Caco-2 (cell line): ENCODE measurements at regions of chr10 and their contacts with region 1.

Region 1: DNA sequence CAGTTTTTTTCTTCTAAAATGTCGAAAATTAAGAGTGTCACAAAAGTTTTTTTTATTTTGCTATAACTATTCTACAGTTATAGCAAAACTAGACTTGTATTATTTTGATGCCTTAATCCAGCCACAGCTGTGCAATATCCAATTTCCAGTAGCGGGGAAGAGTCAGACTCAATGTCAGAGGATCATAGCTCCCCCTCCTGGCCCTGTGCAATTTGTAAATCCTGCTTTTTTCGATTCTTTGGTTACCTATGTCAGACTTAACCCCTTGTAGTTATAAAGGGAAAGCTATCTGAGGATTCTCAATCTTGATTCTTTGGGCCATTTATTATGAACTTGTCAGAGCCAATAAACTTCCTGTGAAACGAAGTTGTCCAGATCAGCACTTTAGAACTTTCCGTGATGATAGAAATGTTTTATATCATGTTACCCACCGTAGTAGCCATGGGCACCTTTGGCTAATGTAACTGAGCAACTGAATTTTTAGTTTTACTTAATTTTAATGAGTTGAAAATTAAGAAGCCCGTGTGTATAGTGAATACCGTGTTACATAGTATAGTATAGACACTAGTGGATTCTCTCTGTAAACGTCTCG is 87.7 kb upstream of the PRKCQ start:
- DNase-seq: peak; percentile 53 to 58
- H3K4me3 ChIP-seq: no peak overlapping the region
- H3K4me3 Mint-ChIP-seq: no peak overlapping the region
- H3K27ac Mint-ChIP-seq: no peak overlapping the region
- H3K4me1 ChIP-seq: no peaks in the 10 kb centered on the region
- H3K4me1 Mint-ChIP-seq: no peaks in the 10 kb centered on the region
- H3K27me3 ChIP-seq: no peaks in the 10 kb centered on the region
- H3K27me3 Mint-ChIP-seq: peaks cover 17% of the 10 kb centered on the region
- CTCF ChIP-seq: peak; percentile 74 to 77

Region 2: DNA sequence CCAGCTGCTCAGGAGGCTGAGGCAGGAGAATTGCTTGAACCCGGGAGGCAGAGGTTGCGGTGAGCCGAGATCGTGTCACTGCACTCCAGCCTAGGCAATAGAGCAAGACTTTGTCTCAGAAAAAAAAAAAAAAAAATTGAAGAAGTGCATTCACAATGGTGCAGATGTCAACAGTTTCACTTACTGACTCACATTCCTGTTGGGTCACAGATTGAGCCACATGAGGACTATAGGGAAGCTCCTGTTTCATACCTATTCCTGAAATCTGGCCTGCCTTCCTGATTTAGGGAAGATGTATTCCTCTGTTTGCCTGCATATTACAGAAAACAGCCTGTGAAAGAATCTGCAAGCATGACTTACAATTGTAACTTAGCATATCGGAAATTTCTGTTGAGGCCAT is 1393.0 kb before region 1 on chr10:
- CTCF ChIA-PET with region 1: no interaction called
- POLR2A ChIA-PET with region 1: no interaction called
- intact Hi-C with region 1: no loop called
- DNase-seq: no peak
- H3K4me3 ChIP-seq: no peak overlapping the region
- H3K4me3 Mint-ChIP-seq: no peak overlapping the region
- H3K27ac Mint-ChIP-seq: no peak overlapping the region
- H3K4me1 ChIP-seq: no peaks in the 10 kb centered on the region
- H3K4me1 Mint-ChIP-seq: no peaks in the 10 kb centered on the region
- H3K27me3 ChIP-seq: no peaks in the 10 kb centered on the region
- H3K27me3 Mint-ChIP-seq: peaks cover 3% of the 10 kb centered on the region
- CTCF ChIP-seq: no peak

Region 3: GRCh38 chr10:6351495-6351894 is 316.3 kb before region 1 on chr10:
- CTCF ChIA-PET with region 1: no interaction called
- POLR2A ChIA-PET with region 1: no interaction called
- intact Hi-C with region 1: no loop called
- DNase-seq: no peak
- H3K4me3 ChIP-seq: no peak overlapping the region
- H3K4me3 Mint-ChIP-seq: no peak overlapping the region
- H3K27ac Mint-ChIP-seq: no peak overlapping the region
- H3K4me1 ChIP-seq: peaks cover 12% of the 10 kb centered on the region
- H3K4me1 Mint-ChIP-seq: no peaks in the 10 kb centered on the region
- H3K27me3 ChIP-seq: no peaks in the 10 kb centered on the region
- H3K27me3 Mint-ChIP-seq: no peaks in the 10 kb centered on the region
- CTCF ChIP-seq: no peak

Region 4: GRCh38 chr10:6416892-6417512 is 250.8 kb before region 1 on chr10:
- CTCF ChIA-PET with region 1: interaction called, 6 read pairs
- POLR2A ChIA-PET with region 1: no interaction called
- intact Hi-C with region 1: loop called (anchors 1 kb)
- DNase-seq: peak in 1 of 2 experiments; percentile 68
- H3K4me3 ChIP-seq: no peak overlapping the region
- H3K4me3 Mint-ChIP-seq: no peak overlapping the region
- H3K27ac Mint-ChIP-seq: no peak overlapping the region
- H3K4me1 ChIP-seq: no peaks in the 10 kb centered on the region
- H3K4me1 Mint-ChIP-seq: no peaks in the 10 kb centered on the region
- H3K27me3 ChIP-seq: peaks cover 5% of the 10 kb centered on the region
- H3K27me3 Mint-ChIP-seq: peaks cover 14% of the 10 kb centered on the region
- CTCF ChIP-seq: peak in 1 of 2 experiments; percentile 81

Region 5: GRCh38 chr10:6445501-6446316 is 222.1 kb before region 1 on chr10:
- CTCF ChIA-PET with region 1: no interaction called
- POLR2A ChIA-PET with region 1: no interaction called
- intact Hi-C with region 1: loop called (anchors 5 kb)
- DNase-seq: peak in 1 of 2 experiments; percentile 40
- H3K4me3 ChIP-seq: no peak overlapping the region
- H3K4me3 Mint-ChIP-seq: no peak overlapping the region
- H3K27ac Mint-ChIP-seq: no peak overlapping the region
- H3K4me1 ChIP-seq: no peaks in the 10 kb centered on the region
- H3K4me1 Mint-ChIP-seq: no peaks in the 10 kb centered on the region
- H3K27me3 ChIP-seq: no peaks in the 10 kb centered on the region; the same call in 1 of the 2 replicates
- H3K27me3 Mint-ChIP-seq: peaks cover 13% of the 10 kb centered on the region
- CTCF ChIP-seq: peak; percentile 55

Region 6: GRCh38 chr10:6907877-6908530 is 240.2 kb after region 1 on chr10:
- CTCF ChIA-PET with region 1: no interaction called
- POLR2A ChIA-PET with region 1: no interaction called
- intact Hi-C with region 1: no loop called
- DNase-seq: no peak
- H3K4me3 ChIP-seq: no peak overlapping the region
- H3K4me3 Mint-ChIP-seq: no peak overlapping the region
- H3K27ac Mint-ChIP-seq: no peak overlapping the region
- H3K4me1 ChIP-seq: no peaks in the 10 kb centered on the region
- H3K4me1 Mint-ChIP-seq: no peaks in the 10 kb centered on the region
- H3K27me3 ChIP-seq: no peaks in the 10 kb centered on the region
- H3K27me3 Mint-ChIP-seq: peaks cover 5% of the 10 kb centered on the region
- CTCF ChIP-seq: no peak